A549 (cell line): ENCODE measurements at regions of chr17 and their contacts with region 1.

Region 1: DNA sequence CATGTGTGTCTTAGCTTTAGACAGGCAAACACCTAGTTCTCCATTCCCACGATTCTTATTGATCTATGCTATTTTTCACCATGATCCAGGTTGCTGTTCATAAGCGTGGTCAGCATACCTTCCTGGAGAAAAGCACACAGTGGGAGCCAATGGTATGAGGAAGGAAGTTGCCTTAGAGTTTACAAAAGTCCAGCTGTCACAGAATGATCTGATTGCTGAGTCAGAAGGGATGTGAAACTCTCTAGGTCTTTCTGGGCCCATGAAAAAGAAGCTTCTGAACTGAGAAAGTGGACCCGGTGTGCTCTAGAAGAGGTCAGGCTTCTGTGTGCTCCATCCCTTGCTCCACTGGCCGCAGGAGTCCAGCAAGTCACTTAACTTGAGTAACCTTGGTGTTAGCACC is 71.0 kb upstream of the CCL1 start:
- DNase-seq: peak in 1 of 2 experiments; percentile 12
- ATAC-seq: no peak
- H3K4me3 ChIP-seq: no peak overlapping the region
- H3K27ac ChIP-seq: no peak overlapping the region
- H3K4me1 ChIP-seq: no peaks in the 10 kb centered on the region
- CTCF ChIP-seq: no peak
- EP300 ChIP-seq: no peak
- POLR2A ChIP-seq: no peak
- RAD21 ChIP-seq: no peak

Region 2: DNA sequence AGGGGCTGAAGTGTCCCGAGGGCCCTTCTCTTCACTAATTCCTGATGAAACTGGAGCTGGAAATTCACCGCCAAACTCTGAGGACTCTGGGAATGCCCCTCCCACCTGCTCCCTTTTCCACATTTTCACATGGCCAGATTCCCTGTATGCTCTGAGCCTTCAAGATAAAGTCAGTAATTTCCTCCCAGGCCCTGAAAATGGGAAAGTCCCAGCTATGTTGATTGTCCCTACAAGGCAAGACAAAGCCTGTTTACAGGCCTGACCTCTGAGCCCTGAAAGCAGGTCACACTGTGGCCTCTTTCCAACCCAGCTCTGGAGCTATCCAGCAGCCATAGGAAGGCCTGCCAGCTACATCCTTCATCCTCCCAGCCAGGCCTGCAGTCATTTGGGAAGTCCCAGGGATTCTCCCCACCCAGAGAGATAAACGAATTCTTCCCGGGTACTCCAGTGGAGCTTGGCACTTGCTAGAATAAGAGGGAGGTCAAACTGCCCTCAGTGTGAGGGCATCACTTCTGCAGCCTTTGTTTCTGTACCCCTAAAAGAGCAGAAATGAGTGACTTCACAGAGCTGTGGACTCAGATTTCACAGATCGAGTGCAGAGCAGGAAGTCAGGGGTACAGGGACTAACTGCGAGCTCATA is 198.5 kb before region 1 on chr17:
- CTCF ChIA-PET with region 1: no interaction called
- POLR2A ChIA-PET with region 1: no interaction called
- DNase-seq: no peak
- ATAC-seq: peak in 1 of 2 experiments; percentile 62; a peak in 3 of 6 replicates
- H3K4me3 ChIP-seq: no peak overlapping the region
- H3K27ac ChIP-seq: peak overlapping the region in 1 of 2 experiments; percentile 7; a peak in 1 of 6 replicates
- H3K4me1 ChIP-seq: no peaks in the 10 kb centered on the region
- CTCF ChIP-seq: no peak
- EP300 ChIP-seq: no peak
- POLR2A ChIP-seq: no peak
- RAD21 ChIP-seq: no peak

Region 3: DNA sequence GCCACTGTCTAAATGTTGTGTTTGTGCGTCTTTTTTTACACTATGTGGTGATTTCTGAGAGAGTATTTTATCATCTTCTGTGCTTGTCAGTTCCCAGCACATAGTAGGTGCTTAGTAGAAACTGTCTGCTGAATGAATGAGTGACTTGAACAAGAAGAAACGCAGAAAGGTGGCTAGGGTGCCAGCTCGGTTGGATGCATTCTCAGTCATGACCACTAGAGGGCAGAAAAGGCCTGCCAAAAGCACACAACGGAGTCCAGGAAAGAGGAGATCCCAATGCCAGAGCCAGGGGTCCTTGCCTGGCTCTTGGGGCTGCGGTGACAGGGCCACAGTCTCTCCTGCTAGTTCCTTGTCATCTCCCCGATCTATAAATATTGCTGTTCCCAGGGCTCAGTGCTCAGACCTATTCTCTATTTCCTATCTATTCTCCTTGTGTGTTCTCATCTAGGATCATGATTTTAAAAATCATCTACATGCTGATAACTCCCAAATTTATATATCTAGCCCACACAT is 13.7 kb before region 1 on chr17:
- CTCF ChIA-PET with region 1: interaction called, 36 read pairs
- POLR2A ChIA-PET with region 1: no interaction called
- DNase-seq: peak; percentile 66 to 81
- ATAC-seq: peak; percentile 60 to 89; a peak in 5 of 6 replicates
- H3K4me3 ChIP-seq: no peak overlapping the region
- H3K27ac ChIP-seq: no peak overlapping the region
- H3K4me1 ChIP-seq: no peaks in the 10 kb centered on the region
- CTCF ChIP-seq: peak; percentile 91
- EP300 ChIP-seq: no peak
- POLR2A ChIP-seq: no peak
- RAD21 ChIP-seq: peak; percentile 91 to 96

Region 4: DNA sequence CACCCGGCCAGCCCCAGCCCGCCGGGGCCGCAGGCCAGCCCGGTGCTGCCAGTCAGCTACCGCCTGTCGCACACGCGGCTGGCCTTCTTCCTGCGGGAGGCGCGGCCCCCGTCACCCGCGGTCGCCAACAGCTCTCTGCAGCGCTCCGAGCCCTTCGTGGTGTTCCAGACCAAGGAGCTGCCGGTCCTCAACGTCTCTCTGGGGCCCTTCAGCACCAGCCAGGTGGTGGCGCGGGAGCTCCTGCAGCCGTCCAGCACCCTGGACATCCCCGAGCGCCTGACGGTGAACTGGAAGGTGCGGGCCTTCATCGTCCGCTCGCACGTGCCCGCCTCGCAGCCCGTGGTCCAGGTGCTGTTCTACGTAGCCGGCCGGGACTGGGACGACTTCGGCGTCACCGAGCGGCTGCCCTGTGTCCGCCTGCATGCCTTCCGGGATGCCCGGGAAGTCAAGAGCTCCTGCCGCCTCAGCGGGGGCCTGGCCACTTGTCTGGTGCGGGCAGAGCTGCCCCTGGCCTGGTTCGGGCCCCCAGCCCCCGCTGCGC is 192.2 kb after region 1 on chr17:
- CTCF ChIA-PET with region 1: no interaction called
- POLR2A ChIA-PET with region 1: no interaction called
- DNase-seq: peak in 1 of 2 experiments; percentile 9
- ATAC-seq: peak in 1 of 2 experiments; percentile 65; a peak in 3 of 6 replicates
- H3K4me3 ChIP-seq: no peak overlapping the region
- H3K27ac ChIP-seq: no peak overlapping the region
- H3K4me1 ChIP-seq: no peaks in the 10 kb centered on the region
- CTCF ChIP-seq: no peak
- EP300 ChIP-seq: no peak
- POLR2A ChIP-seq: no peak
- RAD21 ChIP-seq: no peak